ENCODE measurements at regions of chr17 and their contacts with region 1.

Region 1: DNA sequence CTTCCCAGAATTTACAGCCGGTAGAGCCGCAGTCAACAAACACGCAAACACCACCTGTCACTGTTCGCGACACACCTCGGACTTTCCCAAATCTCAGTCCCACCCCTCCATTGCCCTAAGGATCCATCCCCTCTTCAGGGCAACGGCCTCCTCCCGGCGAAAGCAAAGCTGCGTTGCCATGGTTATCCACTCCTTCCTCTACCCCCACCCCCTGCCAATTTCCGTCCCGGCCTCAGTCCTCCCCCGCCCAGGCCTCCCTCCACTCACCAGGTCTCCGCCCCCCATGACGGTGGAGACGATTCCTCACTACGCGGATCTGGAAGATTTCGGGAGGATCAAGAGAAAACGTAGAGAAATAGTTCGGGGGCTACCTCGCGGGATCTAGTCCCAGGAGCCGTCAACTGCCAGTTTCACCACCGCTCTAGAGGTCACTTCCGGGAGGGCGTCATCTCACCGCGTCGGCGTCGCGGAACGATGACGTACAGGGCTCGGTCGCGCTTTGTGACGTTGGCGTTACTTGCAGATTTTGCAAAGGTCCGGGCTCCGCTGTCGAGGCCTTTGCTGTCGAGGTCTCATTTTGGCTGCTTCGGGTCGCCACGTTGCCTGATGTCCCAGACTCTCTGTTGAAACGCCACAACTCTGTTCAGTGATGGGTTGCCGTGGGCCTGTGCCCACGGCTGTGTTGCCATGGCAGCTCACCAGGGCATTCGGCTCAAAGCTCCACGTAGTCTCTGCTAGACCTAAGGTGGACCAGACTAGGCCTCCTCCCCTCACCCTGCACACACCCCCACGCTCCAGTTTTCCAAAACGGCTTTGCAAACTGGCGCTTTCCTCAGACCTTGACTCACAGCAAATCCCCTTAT is at the start of gene CWC25:
- DNase-seq: peak; percentile 92
- total RNA-seq, gene CWC25: 11.2 and 19.9 TPM in 2 replicates

Region 2: DNA sequence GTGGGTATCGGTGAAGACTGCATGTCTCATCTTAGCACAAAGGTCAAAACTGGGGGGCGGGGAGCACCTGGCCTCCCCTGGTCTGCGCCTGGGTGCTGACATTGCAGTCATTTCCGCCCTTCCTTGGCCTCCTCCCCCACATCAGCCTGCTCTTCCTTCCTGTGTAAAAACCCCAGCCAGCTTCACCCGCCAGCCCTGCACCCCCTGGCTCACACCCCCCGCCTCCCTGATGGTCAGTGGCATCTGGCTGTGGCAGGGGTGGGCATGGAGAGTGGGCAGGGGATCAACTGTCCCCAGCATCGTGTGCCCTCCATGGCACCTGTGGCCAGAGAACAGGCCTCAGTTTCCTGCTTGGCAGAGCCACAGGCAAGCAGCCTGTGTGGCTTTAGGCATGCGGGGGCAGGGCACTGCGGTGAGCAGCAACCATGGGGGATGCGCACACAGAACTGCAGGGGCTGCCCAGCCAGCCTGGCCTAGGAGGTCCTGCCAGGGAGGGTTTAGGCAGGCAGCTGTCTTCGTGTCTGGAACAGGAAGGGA is 73.8 kb after region 1 on chr17:
- in situ Hi-C with region 1: loop called (anchors 10 kb)
- DNase-seq: no peak

Measured in G401 (cell line).